Activated CD4-positive, alpha-beta T cell treated with anti-CD3 and anti-CD28 coated beads, Interleukin-2, amount 10 ng/mL, durations not matched to agents 24 days and 14 days (primary cell): ENCODE measurements at regions of chr2 and their contacts with region 1.

Region 1: DNA sequence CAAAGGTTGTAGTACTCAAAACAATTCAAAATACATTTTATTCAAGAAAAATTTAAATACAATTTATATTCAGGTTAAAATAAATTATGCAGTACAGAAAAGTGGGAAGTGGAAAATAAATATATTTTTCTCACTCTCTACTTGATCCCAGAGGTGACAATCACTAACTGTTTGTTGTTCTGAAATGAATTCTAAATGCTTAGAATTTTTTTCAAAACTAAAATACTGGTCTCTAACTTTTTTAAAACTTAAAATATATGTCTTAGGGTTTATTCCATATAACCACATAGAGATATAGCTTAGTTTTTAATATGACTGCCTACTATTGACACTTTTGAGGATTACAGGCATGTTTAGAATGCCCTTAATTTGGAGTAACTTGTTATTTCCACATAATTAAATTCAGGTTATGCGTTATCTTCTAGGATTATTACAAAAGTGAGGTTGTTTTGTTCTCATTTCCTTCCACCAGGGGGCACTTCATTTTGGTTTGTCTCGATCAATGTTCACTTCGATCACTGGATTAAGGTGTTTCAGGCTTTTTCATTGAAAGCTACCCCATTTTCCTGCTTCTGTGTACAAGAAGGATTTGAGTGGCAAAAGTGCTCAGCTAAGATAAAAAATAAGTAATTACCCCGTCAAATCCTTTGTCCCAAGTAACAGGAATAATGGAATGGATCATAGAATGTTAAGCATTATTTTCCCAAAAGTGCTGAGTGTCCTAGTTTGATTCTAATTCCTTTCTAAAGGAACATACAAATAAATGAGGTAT is 27.1 kb upstream of the TFPI start:
- DNase-seq: peak; percentile 76
- H3K4me3 Mint-ChIP-seq: no peak overlapping the region
- H3K27ac Mint-ChIP-seq: no peak overlapping the region
- H3K4me1 Mint-ChIP-seq: peaks cover 9% of the 10 kb centered on the region
- H3K27me3 Mint-ChIP-seq: peaks cover 1% of the 10 kb centered on the region

Region 2: GRCh38 chr2:186641807-186642321 is 939.4 kb before region 1 on chr2:
- intact Hi-C with region 1: loop called (anchors 5 kb)
- DNase-seq: peak; percentile 81
- H3K4me3 Mint-ChIP-seq: no peak overlapping the region
- H3K27ac Mint-ChIP-seq: no peak overlapping the region
- H3K4me1 Mint-ChIP-seq: peaks cover 24% of the 10 kb centered on the region
- H3K27me3 Mint-ChIP-seq: no peaks in the 10 kb centered on the region

Region 3: DNA sequence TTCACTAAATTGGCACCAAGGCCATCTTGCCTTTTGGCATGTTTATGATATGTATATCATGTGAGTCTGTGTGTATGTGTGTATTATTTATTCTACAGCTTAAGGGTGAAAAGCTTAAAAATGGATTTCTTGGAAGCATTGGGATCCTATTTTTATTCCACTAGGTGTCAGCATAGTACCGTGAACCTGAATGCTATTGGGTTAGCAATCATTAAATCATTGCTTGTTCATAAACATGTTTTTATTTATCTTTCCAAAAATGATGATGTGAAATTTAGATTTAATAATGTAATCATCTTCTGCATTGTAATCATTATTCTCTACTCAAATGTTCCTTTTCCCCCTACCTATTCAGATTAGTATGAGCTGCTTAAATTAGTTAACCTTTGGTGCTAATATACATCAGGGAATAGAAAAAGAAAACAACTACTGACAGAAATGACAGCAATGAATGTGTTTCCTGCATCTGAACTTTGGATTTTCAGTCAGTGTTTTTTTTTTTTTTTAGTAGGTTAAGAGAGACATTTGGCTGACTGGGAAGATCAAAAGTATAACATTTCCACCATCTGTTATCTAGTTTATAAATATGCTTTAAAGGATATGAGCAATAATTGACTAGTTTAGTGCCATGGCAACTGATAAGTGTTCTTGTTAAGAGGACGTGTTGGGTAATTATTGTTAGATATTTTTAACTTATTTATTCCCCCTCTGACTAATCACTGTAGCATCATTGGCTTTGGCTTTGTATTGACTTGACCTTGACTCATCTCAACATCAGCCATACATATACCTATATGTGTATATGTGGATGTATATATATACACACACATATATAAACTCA is 718.2 kb before region 1 on chr2:
- intact Hi-C with region 1: loop called (anchors 2 kb)
- DNase-seq: no peak
- H3K4me3 Mint-ChIP-seq: no peak overlapping the region
- H3K27ac Mint-ChIP-seq: no peak overlapping the region
- H3K4me1 Mint-ChIP-seq: no peaks in the 10 kb centered on the region
- H3K27me3 Mint-ChIP-seq: no peaks in the 10 kb centered on the region

Region 4: DNA sequence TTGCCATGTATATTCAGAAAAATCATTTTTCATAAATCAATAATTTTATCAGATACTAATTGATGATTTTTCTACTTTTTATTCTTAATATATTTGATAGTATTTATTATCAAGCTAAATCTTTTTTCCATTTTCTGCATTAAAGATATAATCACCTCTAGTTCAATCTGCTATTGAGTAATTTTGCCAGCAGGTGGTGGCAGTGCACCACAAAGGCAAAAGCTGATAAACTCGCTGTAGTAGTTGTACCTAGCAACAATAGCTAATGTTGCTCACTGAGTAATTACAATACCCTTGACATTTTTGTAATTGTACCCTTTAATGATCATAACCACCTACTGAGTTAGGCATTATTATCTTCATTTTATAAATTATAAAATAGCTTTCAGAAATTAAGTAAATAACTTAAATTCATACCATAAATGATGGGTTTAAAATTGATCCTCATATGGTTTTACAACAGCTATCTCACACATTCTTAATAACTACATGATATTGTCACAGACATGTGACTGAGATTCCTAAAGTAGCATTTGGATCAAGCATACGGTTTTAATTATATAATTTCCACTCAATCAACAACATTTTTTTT is 81.3 kb before region 1 on chr2:
- intact Hi-C with region 1: loop called (anchors 1 kb)
- DNase-seq: peak; percentile 82
- H3K4me3 Mint-ChIP-seq: no peak overlapping the region
- H3K27ac Mint-ChIP-seq: no peak overlapping the region
- H3K4me1 Mint-ChIP-seq: no peaks in the 10 kb centered on the region
- H3K27me3 Mint-ChIP-seq: peaks cover 5% of the 10 kb centered on the region

Region 5: DNA sequence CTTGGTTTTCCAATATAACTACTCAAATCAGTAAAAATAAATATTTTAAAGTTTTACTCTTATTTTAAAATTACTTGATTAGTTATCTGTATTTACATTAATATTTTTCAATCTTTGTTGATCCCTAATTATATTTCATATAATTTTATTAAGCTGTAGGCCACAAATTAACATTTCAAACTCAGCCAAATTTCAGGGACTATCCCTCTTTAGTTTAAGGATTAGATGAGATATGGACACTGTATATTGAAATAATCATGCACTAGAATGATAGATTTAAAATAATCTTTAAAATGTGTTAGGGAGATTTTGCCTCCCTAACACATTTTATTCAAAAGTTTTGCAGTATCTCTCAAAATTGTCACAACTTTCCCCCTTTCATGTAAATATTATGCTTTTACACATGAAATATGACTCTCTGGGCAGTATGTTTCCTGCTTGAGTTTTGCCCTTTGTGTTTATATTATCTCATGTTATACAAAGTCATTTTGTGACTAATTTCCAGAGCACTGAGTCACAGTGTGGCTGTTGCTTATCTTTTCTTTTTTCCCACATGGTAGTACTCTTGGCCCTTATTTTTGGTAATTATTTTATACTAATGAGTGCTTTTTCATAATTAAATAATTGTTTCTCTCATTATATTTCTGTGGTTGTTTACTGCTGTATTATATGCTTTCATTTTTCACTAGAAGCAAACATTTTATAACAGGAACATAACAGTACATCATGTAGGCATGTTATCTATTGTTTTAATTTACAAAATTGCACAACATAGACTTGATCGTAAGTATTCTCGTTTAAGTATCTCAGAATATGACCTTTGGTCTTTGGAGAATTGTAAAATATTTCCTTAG is 28.3 kb before region 1 on chr2:
- intact Hi-C with region 1: loop called (anchors 1 kb)
- DNase-seq: no peak
- H3K4me3 Mint-ChIP-seq: no peak overlapping the region
- H3K27ac Mint-ChIP-seq: no peak overlapping the region
- H3K4me1 Mint-ChIP-seq: peaks cover 8% of the 10 kb centered on the region
- H3K27me3 Mint-ChIP-seq: peaks cover 18% of the 10 kb centered on the region

Region 6: GRCh38 chr2:187842978-187843847 is 261.9 kb after region 1 on chr2:
- intact Hi-C with region 1: loop called (anchors 1 kb)
- DNase-seq: peak; percentile 59
- H3K4me3 Mint-ChIP-seq: no peak overlapping the region
- H3K27ac Mint-ChIP-seq: no peak overlapping the region
- H3K4me1 Mint-ChIP-seq: no peaks in the 10 kb centered on the region
- H3K27me3 Mint-ChIP-seq: no peaks in the 10 kb centered on the region

Region 7: GRCh38 chr2:188512456-188512855 is 931.1 kb after region 1 on chr2:
- intact Hi-C with region 1: loop called (anchors 10 kb)
- DNase-seq: no peak
- H3K4me3 Mint-ChIP-seq: no peak overlapping the region
- H3K27ac Mint-ChIP-seq: no peak overlapping the region
- H3K4me1 Mint-ChIP-seq: no peaks in the 10 kb centered on the region
- H3K27me3 Mint-ChIP-seq: peaks cover 2% of the 10 kb centered on the region